Esophagus muscularis mucosa (tissue), 4 donors: ENCODE measurements at regions of chr1 and their contacts with region 1.

Region 1: DNA sequence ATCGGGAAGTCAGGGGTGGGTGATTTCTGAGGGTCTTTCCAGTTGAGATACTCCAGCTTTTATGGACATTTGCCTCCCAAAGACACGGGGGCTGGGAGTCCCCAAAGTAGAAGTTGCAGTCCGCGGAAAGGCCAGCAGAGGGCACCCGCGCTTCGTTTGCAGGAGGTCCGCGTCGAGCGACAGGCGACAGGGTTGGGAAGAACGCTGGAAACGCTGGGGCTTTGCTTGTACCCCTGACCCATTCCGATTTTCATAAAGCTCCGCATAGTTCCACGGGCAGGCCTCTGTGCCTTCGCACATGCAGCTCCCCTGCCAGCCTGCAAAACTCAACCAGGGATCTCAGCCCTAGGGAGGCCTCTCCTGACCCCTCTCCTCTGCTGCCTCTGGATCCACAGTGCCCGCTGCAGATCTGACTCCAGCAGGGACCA is 44.2 kb upstream of the LAPTM5 start:
- DNase-seq: peak; percentile 95
- H3K4me3 ChIP-seq: peak overlapping the region in 3 of 4 donors; percentile 17 to 29 (median 18)
- H3K27ac ChIP-seq: no peak overlapping the region
- H3K4me1 ChIP-seq: peaks cover 20 to 38% (median 34%) of the 10 kb centered on the region in 4 donors
- H3K27me3 ChIP-seq: no peaks in the 10 kb centered on the region
- CTCF ChIP-seq: peak; percentile 94 to 98 (median 97)
- EP300 ChIP-seq: no peak
- POLR2A ChIP-seq: no peak

Region 2: GRCh38 chr1:30911046-30911954 is 109.5 kb after region 1 on chr1:
- intact Hi-C with region 1: loop called (anchors 1 kb)
- DNase-seq: no peak
- H3K4me3 ChIP-seq: no peak overlapping the region
- H3K27ac ChIP-seq: peak overlapping the region in 3 of 4 donors; percentile 31 to 38 (median 32)
- H3K4me1 ChIP-seq: peaks cover 18 to 41% (median 40%) of the 10 kb centered on the region in 4 donors
- H3K27me3 ChIP-seq: no peaks in the 10 kb centered on the region
- CTCF ChIP-seq: peak; percentile 89 to 94 (median 93)
- EP300 ChIP-seq: no peak
- POLR2A ChIP-seq: no peak